ENCODE measurements at regions of chr20 and their contacts with region 1.

Region 1: GRCh38 chr20:9407805-9408421 is 106.5 kb upstream of the LAMP5 start:
- DNase-seq: peak; percentile 75 to 77
- H3K4me3 ChIP-seq: no peak overlapping the region
- H3K27ac ChIP-seq: peak overlapping the region in 2 of 3 donors; percentile 59
- H3K4me1 ChIP-seq: peaks cover 37 to 47% of the 10 kb centered on the region in 2 donors
- H3K27me3 ChIP-seq: no peaks in the 10 kb centered on the region
- CTCF ChIP-seq: peak; percentile 59 to 93 (median 86)
- POLR2A ChIP-seq: no peak

Region 2: GRCh38 chr20:9609887-9610502 is 202.1 kb after region 1 on chr20:
- intact Hi-C with region 1: loop called (anchors 2 kb)
- DNase-seq: peak; percentile 55 to 67
- H3K4me3 ChIP-seq: no peak overlapping the region
- H3K27ac ChIP-seq: no peak overlapping the region
- H3K4me1 ChIP-seq: peaks cover 0 to 4% of the 10 kb centered on the region in 2 donors
- H3K27me3 ChIP-seq: no peaks in the 10 kb centered on the region
- CTCF ChIP-seq: peak in 5 of 6 experiments; percentile 58 to 80 (median 66)
- POLR2A ChIP-seq: no peak